PC-3 (cell line): ENCODE measurements at regions of chr1 and their contacts with region 1.

Region 1: DNA sequence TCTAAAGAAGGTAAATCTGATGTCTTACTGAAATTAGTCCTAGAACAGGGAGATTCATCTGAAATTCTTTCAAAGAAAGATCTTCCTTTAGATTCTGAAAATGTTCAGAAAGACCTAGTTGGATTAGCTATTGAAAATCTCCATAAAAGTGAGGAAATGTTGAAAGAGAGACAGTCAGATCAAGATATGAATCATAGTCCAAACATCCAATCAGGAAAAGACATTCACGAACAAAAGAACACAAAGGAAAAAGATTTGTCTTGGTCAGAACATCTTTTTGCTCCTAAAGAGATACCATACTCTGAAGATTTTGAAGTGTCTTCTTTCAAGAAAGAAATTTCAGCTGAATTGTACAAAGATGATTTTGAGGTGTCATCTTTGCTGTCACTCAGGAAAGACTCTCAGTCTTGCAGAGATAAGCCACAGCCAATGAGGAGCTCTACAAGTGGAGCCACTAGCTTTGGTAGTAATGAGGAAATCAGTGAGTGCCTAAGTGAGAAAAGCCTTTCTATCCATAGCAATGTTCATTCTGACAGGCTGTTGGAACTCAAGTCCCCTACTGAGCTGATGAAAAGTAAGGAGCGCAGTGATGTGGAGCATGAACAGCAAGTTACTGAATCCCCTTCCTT is 61.6 kb upstream of the QSOX1 start:
- DNase-seq: no peak
- ATAC-seq: no peak
- H3K4me3 ChIP-seq: no peak overlapping the region
- H3K27ac ChIP-seq: no peak overlapping the region
- H3K4me1 ChIP-seq: no peaks in the 10 kb centered on the region
- H3K27me3 ChIP-seq: no peaks in the 10 kb centered on the region
- CTCF ChIP-seq: no peak

Region 2: DNA sequence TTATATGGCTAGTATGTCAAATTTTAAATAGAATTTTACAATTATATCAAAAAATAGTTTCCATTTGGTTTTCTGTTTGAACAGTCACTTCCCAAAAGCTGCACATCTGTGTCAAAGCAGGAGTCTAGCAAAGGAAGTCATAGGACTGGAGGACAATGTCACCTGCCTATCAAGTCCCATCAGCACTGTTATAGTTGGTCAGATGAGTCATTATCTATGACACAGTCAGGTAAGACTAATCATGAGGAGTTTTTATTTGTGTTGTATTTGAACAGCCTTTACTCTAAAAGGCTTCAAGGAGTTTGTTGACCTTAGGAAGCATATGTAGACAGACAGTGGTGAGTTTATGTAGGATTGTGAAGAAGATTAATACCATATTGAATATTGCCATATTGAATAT is 12.6 kb before region 1 on chr1:
- CTCF ChIA-PET with region 1: no interaction called
- POLR2A ChIA-PET with region 1: no interaction called
- intact Hi-C with region 1: loop called (anchors 1 kb)
- DNase-seq: peak; percentile 82
- ATAC-seq: peak; percentile 93
- H3K4me3 ChIP-seq: no peak overlapping the region
- H3K27ac ChIP-seq: peak overlapping the region; percentile 58
- H3K4me1 ChIP-seq: peaks cover 26% of the 10 kb centered on the region
- H3K27me3 ChIP-seq: no peaks in the 10 kb centered on the region
- CTCF ChIP-seq: no peak